Gastrocnemius medialis (tissue), 4 donors: ENCODE measurements at regions of chr12 and their contacts with region 1.

Region 1: DNA sequence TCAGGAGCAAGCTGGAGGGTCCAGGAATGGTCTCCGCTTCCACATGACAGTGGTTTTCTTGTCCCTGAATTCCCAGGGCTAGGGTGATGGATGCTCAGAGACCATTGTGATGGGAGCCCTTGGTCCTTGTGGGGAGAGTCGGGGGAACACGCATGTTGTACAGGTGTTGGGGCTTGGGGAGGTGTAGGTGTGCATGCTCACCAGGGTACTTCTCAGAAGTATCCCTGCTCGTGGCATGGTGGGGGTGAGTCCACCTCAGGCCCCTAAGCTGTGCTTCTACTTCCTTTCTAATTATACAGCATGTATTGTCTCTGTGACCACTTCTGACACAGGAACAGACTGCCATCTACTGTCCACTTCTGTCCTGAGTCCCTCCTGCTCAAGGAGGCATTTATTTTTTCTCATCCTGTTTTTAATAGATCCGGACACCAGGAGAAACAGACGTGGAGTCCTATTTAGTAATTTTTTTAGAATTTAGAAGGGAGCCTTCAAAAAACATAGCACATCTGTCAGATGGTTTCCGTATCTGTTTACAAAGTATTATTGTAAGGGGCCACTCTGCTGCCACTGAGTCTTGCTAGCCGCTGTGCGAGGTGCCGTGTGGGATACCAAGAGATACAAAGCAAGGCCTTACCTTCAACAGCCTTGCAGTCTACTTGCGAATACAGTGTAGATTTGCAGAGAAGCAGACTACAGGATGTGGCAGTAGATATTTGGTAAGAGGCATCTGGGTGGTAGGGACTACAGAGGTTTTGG is 10.5 kb downstream of the NTF3 start:
- DNase-seq: peak; percentile 28 to 37
- ATAC-seq: peak; percentile 93 to 96
- H3K4me3 ChIP-seq: no peak overlapping the region
- H3K27ac ChIP-seq: no peak overlapping the region
- H3K4me1 ChIP-seq: peaks cover 10 to 11% of the 10 kb centered on the region in 2 donors
- H3K27me3 ChIP-seq: no peaks in the 10 kb centered on the region
- CTCF ChIP-seq: peak; percentile 54 to 82 (median 73)
- POLR2A ChIP-seq: no peak

Region 2: GRCh38 chr12:4857472-4858291 is 584.7 kb before region 1 on chr12:
- in situ Hi-C with region 1: loop called in 1 of 4 experiments (anchors 25 kb)
- intact Hi-C with region 1: no loop called
- DNase-seq: peak; percentile 30 to 35
- ATAC-seq: peak; percentile 88 to 89
- H3K4me3 ChIP-seq: peak overlapping the region; percentile 1 to 24 (median 13)
- H3K27ac ChIP-seq: no peak overlapping the region
- H3K4me1 ChIP-seq: peaks cover 5 to 9% of the 10 kb centered on the region in 2 donors
- H3K27me3 ChIP-seq: no peaks in the 10 kb centered on the region
- CTCF ChIP-seq: peak; percentile 63 to 87 (median 72)
- POLR2A ChIP-seq: no peak

Region 3: DNA sequence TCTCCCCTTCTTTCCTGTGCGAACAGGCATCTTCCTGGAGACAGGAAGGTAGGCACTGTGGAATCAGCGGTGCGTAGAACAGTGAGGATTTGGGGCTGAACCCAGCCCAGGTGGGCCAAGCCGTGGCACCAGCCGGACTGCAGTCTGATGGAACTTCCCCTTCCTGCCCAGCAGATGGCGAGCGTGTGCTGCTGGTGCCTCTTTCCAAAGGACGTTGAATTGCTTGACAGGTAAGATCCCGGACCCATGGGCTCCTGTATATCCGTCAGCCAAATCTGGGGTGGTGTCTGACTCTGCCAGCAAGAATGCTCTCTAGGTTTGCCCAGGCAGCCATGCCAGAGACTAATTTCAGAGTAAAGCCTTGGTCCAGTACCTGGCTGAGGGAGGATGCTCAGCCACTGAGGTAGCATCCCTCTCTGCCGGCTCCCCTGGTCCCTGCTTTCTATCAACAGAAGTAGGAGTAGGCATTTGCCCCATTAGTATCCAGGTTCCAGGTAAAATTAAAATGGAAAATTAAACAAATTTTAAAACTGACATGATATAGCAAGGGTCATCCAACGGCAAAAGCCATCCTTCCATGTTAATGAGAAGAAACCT is 419.9 kb before region 1 on chr12:
- in situ Hi-C with region 1: loop called in 3 of 4 experiments (anchors 10 to 25 kb)
- intact Hi-C with region 1: loop called (anchors 1 kb)
- DNase-seq: no peak
- ATAC-seq: peak; percentile 49 to 54
- H3K4me3 ChIP-seq: no peak overlapping the region
- H3K27ac ChIP-seq: no peak overlapping the region
- H3K4me1 ChIP-seq: peaks cover 3 to 7% of the 10 kb centered on the region in 2 donors
- H3K27me3 ChIP-seq: no peaks in the 10 kb centered on the region
- CTCF ChIP-seq: peak; percentile 70 to 93 (median 83)
- POLR2A ChIP-seq: no peak

Region 4: GRCh38 chr12:5171701-5172100 is 270.7 kb before region 1 on chr12:
- in situ Hi-C with region 1: loop called in 1 of 4 experiments (anchors 10 kb)
- intact Hi-C with region 1: loop called (anchors 1 kb)
- DNase-seq: no peak
- ATAC-seq: peak; percentile 17 to 35
- H3K4me3 ChIP-seq: no peak overlapping the region
- H3K27ac ChIP-seq: peak overlapping the region in 3 of 4 donors; percentile 80 to 89 (median 83)
- H3K4me1 ChIP-seq: peaks cover 25 to 37% of the 10 kb centered on the region in 2 donors
- H3K27me3 ChIP-seq: no peaks in the 10 kb centered on the region
- CTCF ChIP-seq: peak; percentile 30 to 65 (median 50)
- POLR2A ChIP-seq: no peak

Region 5: GRCh38 chr12:5428332-5429221 is 13.9 kb before region 1 on chr12:
- in situ Hi-C with region 1: no loop called
- intact Hi-C with region 1: loop called (anchors 2 kb)
- DNase-seq: no peak
- ATAC-seq: no peak
- H3K4me3 ChIP-seq: no peak overlapping the region
- H3K27ac ChIP-seq: no peak overlapping the region
- H3K4me1 ChIP-seq: peaks cover 22 to 40% of the 10 kb centered on the region in 2 donors
- H3K27me3 ChIP-seq: peaks cover 2 to 34% (median 21%) of the 10 kb centered on the region in 3 donors
- CTCF ChIP-seq: peak in 4 of 5 experiments; percentile 19 to 47 (median 33)
- POLR2A ChIP-seq: no peak